Motor neuron (in vitro differentiated cells): ENCODE measurements at regions of chr13 and their contacts with region 1.

Region 1: DNA sequence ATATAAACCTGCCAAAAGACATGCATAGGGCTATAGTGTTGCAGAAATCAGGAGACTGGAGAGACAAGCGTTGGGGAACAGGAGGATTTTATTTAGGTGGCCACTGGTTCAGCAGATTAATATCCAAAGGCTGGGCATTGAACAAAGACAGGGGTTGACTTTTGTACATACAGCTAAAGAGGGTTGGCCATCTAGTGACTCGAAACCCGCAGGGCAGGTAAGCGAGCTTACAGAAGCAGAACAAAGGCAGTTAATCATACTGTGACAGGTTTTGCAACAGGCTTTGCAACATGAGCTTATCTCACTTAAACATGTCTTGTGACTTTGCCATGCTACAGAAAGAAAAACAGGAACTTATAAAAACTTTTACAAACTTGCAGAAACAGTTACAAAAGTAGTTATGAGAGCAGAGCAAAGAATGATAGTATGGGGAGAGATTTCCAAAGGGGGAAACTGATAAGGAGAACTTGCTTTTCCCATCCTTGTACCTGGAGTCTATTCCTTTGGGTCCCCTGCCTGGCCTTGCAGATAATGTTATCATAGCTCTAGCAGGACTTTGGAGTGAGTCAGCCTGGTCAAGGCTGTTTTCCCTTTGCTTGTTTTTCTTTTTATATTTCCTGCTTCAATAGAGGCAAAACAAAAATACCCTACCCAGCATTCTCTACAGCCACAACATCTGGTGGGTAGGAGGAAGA is 234.2 kb downstream of the PCDH17 start:
- ATAC-seq: no peak
- H3K4me3 ChIP-seq: no peak overlapping the region
- H3K27ac ChIP-seq: no peak overlapping the region
- H3K4me1 ChIP-seq: no peaks in the 10 kb centered on the region

Region 2: GRCh38 chr13:57624565-57625435 is 240.9 kb before region 1 on chr13:
- in situ Hi-C with region 1: loop called in 1 of 9 experiments (anchors 25 kb)
- ATAC-seq: peak; percentile 53 to 82 (median 64)
- H3K4me3 ChIP-seq: no peak overlapping the region
- H3K27ac ChIP-seq: no peak overlapping the region
- H3K4me1 ChIP-seq: no peaks in the 10 kb centered on the region